Head of caudate nucleus (tissue), 42 donors: ENCODE measurements at regions of chr15 and their contacts with region 1.

Region 1: DNA sequence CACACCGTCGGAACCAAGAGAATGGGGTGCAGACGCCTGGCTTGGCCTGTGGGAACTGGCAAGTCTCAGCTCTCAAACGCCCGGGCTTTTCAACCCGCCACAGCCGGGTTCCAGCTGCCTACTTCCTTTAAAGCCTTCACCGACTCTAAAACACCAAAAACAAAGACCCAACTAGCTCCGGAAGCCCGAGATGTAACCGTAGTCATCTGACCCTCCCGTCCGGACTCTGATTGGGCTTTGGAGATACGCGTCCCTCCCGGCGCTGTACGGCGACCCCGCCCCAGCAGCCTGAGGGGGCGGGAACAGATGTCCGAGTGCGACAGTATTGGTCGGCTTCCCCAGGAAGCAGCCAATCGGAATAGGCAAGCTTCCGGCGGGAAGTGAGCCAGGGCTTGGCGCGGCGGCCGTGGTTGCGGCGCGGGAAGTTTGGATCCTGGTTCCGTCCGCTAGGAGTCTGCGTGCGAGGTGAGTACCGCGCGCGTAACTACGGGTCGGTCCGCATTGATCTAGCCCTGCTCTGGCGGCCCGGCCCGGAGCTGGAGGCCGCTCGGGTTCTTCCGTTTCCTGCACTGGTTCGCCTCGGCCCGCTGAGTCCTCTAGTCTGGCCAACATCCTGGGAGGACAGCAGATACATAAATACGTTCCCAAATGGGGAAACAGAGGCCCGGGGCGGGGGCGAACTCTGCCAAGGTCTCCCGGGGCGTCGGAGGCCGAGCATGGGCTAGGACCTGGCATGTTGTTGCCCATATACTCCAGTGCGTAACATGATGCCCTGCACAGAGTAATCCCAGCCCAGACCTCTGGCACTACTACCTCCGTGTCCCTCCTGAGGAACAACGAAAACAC is at the start of gene BLM:
- DNase-seq: peak; percentile 93 to 99 (median 97)

Region 2: DNA sequence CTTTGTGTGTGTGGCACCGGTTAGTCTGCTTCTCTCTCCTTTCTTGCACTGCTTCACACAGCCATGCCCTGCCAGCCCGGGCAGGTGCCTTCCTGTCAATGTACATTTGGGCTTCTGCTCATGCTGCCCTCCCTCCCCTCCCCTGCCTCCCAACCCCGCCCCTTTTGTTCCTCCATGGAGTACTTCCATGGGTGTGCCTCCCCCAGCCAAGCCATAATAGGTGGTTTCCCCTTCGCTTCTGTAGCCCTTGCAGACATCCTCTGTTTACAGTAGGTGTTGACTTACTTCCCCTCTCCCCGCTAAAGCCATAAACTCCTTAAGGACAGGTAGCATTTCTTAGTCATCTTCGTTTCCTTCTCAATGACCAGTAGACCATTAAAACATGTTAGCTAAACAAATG is 219.3 kb before region 1 on chr15:
- intact Hi-C with region 1: no loop called
- DNase-seq: no peak

Region 3: DNA sequence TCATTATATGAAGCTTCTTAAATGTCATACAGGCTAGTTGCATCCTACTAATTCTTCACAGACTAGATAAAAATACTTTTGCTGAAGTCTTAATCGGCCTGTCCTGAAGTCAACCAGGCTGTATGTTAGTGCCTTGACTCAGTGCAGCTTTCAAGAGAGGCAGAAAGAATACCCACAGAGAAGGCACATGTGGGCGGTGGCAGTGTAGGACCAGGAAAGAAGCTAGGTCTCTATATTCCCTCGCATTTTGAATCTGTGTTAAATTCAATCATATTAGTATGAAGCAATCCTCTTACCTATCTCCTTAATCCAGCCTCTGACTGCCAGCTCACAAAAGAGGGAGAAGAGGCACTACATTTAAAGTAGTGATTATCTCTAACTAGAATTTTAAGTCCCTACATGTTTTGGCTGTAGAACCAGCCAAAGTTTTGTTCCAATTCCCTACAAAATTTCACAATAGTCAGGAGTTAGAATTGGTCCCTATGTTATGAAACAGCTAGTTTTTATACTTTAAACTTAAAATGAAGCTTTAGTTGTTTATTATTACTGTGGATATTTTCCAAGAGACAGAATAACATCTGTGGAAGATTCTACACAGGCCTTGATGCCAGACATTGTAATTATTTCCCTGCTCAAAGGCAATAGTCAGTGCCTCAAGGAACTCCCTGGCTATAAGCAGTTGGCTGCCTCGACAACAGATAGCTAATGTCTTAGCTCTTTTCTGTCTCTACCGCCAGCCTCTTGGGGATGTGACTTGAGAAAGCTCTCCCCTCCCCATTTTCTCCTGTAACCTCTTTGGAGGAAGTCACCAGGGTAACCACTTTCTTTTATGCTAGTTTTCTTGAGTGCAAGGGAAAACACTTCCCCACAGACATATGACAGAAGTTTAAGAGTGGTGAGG is 155.6 kb before region 1 on chr15:
- intact Hi-C with region 1: no loop called
- DNase-seq: peak in 2 of 42 donors; percentile 21 to 63

Region 4: DNA sequence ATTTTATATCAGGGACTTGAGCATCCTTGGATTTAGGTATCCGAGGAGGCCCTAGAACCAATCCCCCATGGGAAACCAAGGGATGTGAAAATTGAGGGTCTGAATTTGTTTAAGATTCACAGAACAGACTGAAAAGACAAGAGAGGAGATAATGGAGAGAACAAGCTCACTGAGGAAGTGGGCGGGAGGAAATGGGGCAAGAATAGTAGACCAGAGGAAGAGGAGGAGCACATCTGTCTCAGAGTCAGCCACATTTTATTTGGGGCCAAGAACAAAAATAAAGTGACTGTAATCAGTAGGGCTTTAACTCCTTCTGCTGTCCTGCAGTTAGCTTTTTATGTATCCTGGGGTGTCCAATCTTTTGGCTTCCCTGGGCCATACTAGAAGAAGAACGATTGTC is 63.7 kb after region 1 on chr15:
- intact Hi-C with region 1: no loop called
- DNase-seq: no peak

Region 5: GRCh38 chr15:90869601-90870353 is 152.6 kb after region 1 on chr15:
- intact Hi-C with region 1: loop called (anchors 5 kb)
- DNase-seq: peak in 15 of 42 donors; percentile 36 to 84 (median 54)